Activated CD4-positive, alpha-beta T cell treated with anti-CD3 and anti-CD28 coated beads for 36 hours (primary cell): ENCODE measurements at regions of chr13 and their contacts with region 1.

Region 1: DNA sequence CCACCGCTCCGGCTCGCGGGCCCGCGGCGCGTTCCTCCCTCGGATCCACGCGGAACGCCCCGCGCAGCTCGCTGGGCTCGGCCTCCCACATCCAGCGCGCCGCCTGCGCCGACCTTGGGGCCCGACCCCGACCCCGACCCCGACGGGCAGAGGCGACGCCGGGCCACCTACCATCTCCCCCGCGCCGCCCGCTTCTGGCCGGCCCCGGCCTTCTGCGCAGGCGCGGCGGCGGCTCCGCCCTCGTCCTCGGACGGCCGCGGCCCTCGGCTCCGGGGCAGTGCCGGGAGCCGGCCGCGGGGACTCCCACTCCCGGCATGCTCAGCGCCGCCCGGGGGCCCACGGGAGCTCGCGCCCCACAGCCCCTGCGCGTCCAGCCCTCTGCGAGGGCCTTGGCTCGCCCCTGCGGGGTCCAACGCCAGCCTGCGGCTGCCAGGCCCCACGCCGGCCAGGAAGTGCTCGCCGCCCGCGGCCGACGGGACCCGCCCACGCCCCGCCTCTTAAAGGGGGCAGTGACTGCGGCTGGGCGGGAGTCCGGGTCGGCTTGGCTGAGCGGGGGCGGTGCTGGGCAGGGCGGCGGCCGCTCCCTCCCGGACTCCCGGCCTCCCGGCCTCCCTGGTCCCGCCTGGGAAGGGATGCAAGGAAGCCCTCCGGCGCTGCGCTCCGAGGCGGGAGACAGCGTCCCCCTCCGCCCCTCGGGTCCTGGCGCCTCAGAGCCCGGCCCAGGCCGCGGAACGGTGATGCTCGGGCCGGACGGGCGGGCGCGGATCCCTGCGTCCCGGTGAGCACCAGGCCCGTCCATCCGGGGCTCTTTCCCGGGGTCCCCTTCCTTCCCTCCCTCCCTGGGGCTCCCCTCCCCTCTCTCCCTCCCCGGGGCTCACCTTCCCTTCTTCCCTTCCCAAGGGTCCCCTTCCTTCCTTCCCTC is at the start of gene DCUN1D2:
- DNase-seq: peak; percentile 83
- ATAC-seq: peak; percentile 72
- H3K4me3 Mint-ChIP-seq: peak within 1 kb of the TSS; percentile 85
- H3K27ac Mint-ChIP-seq: peak within 1 kb of the TSS; percentile 86
- H3K4me1 Mint-ChIP-seq: peaks cover 64% of the 10 kb centered on the region
- H3K27me3 Mint-ChIP-seq: no peaks in the 10 kb centered on the region
- total RNA-seq, gene DCUN1D2: 12.1 to 15.3 TPM

Region 2: DNA sequence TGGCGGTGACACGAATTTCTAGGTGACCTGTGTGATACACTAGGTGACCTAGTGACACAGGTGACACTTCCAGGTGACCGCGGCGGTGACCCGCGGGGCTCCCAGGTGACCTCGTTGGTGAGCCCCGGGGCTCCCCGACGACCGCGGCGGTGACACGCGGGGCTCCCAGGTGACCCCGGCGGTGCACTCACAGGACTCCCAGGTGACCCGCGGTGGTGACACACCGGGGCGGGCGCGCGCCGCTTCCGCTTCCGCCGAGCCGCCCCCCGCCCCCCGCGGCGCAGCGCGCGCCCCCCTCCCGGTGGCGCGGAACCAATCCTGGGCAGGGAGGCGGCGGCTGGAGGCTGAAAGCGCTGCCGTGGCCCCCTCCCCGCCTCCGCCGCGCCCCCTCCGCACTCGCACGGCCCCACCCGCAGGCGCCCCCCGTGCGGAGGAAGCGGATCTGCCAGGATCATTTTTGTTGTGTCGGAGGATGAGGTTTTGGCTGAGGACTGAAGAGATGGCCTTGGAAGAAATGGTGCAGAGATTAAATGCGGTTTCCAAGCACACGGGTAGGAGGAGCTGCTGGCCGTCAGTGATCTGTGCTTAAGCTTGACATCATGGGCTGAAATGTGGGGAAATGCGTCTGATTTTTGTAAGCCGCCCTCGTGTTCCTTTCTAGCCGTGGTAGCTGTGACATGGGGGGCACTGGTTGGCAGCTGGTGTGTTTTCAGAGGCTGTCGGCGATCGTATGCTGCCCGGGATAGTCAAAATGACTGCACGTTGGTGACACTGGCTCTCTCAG is 521.7 kb before region 1 on chr13 and contains the start of gene MCF2L:
- CTCF ChIA-PET with region 1: no interaction called
- POLR2A ChIA-PET with region 1: no interaction called
- intact Hi-C with region 1: loop called in 1 of 2 experiments (anchors 2 kb)
- DNase-seq: peak; percentile 82
- ATAC-seq: peak; percentile 82
- H3K4me3 Mint-ChIP-seq: peak within 1 kb of the TSS; percentile 93
- H3K27ac Mint-ChIP-seq: peak within 1 kb of the TSS; percentile 93
- H3K4me1 Mint-ChIP-seq: peaks cover 22% of the 10 kb centered on the region
- H3K27me3 Mint-ChIP-seq: no peaks in the 10 kb centered on the region
- total RNA-seq, gene MCF2L: 8.4 to 8.7 TPM

Region 3: GRCh38 chr13:113506025-113506685 is 15.4 kb after region 1 on chr13:
- CTCF ChIA-PET with region 1: interaction called, 10 read pairs
- POLR2A ChIA-PET with region 1: no interaction called
- intact Hi-C with region 1: no loop called
- DNase-seq: no peak
- ATAC-seq: no peak
- H3K4me3 Mint-ChIP-seq: no peak overlapping the region
- H3K27ac Mint-ChIP-seq: no peak overlapping the region
- H3K4me1 Mint-ChIP-seq: no peaks in the 10 kb centered on the region
- H3K27me3 Mint-ChIP-seq: no peaks in the 10 kb centered on the region

Region 4: DNA sequence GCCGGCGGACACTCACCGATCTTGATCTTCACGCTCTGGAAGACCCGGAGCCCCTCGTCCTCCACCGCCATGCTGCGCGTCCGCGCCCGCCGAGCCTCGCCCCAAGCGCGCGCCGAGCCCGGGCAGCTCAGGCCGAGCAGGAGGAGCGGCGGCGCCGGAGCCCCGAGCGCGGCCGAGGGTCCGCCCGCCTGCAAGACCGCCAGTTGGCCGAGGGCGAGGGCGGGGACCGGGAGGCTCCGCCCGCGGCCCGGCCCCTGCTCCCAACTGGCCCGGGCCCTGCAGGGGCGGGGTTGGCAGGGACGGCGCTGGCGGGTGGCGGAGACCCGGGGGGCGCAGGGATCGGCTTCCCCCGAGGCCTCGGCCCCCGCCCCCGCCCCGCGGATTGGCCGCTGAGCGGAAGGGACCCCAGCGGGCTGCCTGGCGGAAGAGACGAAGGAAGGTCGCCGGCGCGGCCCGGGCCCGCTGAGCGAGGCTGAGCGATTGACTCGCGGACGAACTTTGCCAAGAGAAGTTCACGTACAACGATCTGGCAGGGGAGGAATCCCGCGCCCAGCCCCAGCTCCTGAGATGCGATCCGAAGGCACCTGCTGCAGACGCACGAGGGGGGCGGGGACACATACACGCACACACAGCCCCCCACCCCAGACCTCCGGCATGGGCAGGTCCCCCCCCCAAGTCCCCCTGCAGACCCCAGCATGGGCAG is 641.8 kb after region 1 on chr13 and contains the start of gene RASA3:
- CTCF ChIA-PET with region 1: no interaction called
- POLR2A ChIA-PET with region 1: no interaction called
- intact Hi-C with region 1: loop called in 1 of 2 experiments (anchors 5 kb)
- DNase-seq: peak; percentile 74
- ATAC-seq: peak; percentile 35
- H3K4me3 Mint-ChIP-seq: peak within 1 kb of the TSS; percentile 100
- H3K27ac Mint-ChIP-seq: peak within 1 kb of the TSS; percentile 95
- H3K4me1 Mint-ChIP-seq: peaks cover 39% of the 10 kb centered on the region
- H3K27me3 Mint-ChIP-seq: no peaks in the 10 kb centered on the region
- total RNA-seq, gene RASA3: 33.0 to 34.7 TPM